ENCODE measurements at regions of chr12 and their contacts with region 1.

Region 1: DNA sequence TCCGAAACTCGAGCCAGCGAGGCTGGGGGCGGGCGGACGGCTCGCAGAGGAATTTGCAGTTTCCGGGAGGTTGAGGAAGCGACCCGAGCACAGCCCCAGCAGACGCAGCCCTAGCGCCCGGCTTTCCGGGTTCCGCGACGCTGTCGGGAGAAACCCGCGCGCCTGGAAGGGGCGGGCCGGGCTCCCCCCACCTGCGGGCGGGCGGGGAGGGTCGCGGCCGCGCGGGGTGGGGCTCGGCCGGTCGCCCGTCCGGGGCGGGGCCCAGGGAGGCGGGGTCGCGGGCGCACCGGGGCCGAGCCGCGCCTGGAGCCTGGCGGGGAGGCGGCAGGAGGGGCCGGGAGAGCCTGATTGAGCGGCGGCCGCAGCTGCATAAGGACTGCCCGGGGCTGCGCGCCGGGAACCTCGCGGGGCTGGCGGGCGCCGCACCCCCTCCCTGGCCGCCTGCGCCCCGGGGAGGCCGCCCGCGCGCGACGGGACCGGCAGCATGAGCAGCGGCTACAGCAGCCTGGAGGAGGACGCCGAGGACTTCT is at the start of gene RASSF3:
- DNase-seq: peak; percentile 44
- ATAC-seq: peak; percentile 75
- H3K4me3 ChIP-seq: peak within 1 kb of the TSS; percentile 89 to 97 (median 95)
- H3K27ac ChIP-seq: peak within 1 kb of the TSS; percentile 80
- H3K4me1 ChIP-seq: peaks cover 34% of the 10 kb centered on the region
- H3K27me3 ChIP-seq: no peaks in the 10 kb centered on the region; a peak in 1 of 5 replicates
- CTCF ChIP-seq: no peak
- EP300 ChIP-seq: no peak
- POLR2A ChIP-seq: peak in 1 of 2 experiments; percentile 52; a peak in 2 of 4 replicates
- RAD21 ChIP-seq: no peak
- total RNA-seq, gene RASSF3: 16.0 and 21.3 TPM in 2 replicates

Region 2: GRCh38 chr12:64544371-64545080 is 65.7 kb before region 1 on chr12:
- CTCF ChIA-PET with region 1: interaction called, 3 read pairs
- POLR2A ChIA-PET with region 1: no interaction called
- in situ Hi-C with region 1: loop called (anchors 5 kb)
- intact Hi-C with region 1: loop called (anchors 1 kb)
- DNase-seq: no peak
- ATAC-seq: no peak
- H3K4me3 ChIP-seq: no peak overlapping the region
- H3K27ac ChIP-seq: no peak overlapping the region
- H3K4me1 ChIP-seq: no peaks in the 10 kb centered on the region
- H3K27me3 ChIP-seq: no peaks in the 10 kb centered on the region
- CTCF ChIP-seq: no peak
- EP300 ChIP-seq: no peak
- POLR2A ChIP-seq: no peak
- RAD21 ChIP-seq: no peak

Region 3: GRCh38 chr12:64596252-64596793 is 13.9 kb before region 1 on chr12:
- CTCF ChIA-PET with region 1: no interaction called
- POLR2A ChIA-PET with region 1: no interaction called
- in situ Hi-C with region 1: no loop called
- intact Hi-C with region 1: loop called (anchors 1 kb)
- DNase-seq: peak; percentile 34
- ATAC-seq: peak; percentile 93
- H3K4me3 ChIP-seq: no peak overlapping the region
- H3K27ac ChIP-seq: no peak overlapping the region
- H3K4me1 ChIP-seq: peaks cover 36% of the 10 kb centered on the region
- H3K27me3 ChIP-seq: no peaks in the 10 kb centered on the region
- CTCF ChIP-seq: no peak
- EP300 ChIP-seq: no peak
- POLR2A ChIP-seq: no peak
- RAD21 ChIP-seq: no peak

Region 4: DNA sequence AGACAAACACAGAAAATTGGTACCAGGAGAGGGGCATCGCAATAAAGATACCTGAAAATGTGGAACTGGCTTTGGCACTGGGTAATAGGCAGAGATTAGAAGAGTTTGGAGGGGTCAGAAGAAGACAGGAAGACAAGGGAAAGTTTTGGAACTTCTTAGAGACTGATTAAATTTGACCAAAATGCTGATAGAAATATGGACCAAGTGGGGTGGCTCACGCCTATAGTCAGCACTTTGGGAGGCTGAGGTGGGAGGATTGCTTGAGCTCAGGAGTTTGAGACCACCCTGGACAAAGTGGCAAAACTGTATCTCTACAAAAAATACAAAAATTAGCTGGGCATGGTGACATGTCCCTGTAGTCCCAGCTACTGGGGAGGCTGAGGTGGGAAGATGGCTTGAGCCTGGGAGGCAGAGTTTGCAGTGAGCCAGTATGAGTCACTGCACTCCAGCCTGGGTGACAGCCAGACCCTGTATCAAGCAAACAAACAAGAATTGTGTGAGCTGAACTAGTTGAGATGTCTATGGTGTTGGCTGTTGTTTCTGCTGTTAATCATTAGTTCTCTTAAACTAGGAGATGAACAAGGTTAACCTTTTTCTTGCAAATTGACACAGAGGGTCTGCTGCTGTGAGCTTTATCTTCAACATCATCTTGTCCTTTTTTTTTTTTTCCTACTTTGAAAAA is 23.6 kb after region 1 on chr12:
- CTCF ChIA-PET with region 1: no interaction called
- POLR2A ChIA-PET with region 1: interaction called, 14 read pairs
- in situ Hi-C with region 1: no loop called
- intact Hi-C with region 1: loop called (anchors 1 kb)
- DNase-seq: peak; percentile 88
- ATAC-seq: peak; percentile 99
- H3K4me3 ChIP-seq: no peak overlapping the region
- H3K27ac ChIP-seq: peak overlapping the region; percentile 36
- H3K4me1 ChIP-seq: peaks cover 58% of the 10 kb centered on the region
- H3K27me3 ChIP-seq: no peaks in the 10 kb centered on the region
- CTCF ChIP-seq: peak; percentile 34; the same call in 1 of the 2 replicates
- EP300 ChIP-seq: 0 out of 4 replicates have a peak, but pooled peaks of 1 of the 2 experiments have one; percentile 12
- POLR2A ChIP-seq: no peak
- RAD21 ChIP-seq: no peak

Region 5: GRCh38 chr12:64679487-64679983 is 69.3 kb after region 1 on chr12:
- CTCF ChIA-PET with region 1: no interaction called
- POLR2A ChIA-PET with region 1: no interaction called
- in situ Hi-C with region 1: no loop called
- intact Hi-C with region 1: no loop called
- DNase-seq: no peak
- ATAC-seq: no peak
- H3K4me3 ChIP-seq: no peak overlapping the region
- H3K27ac ChIP-seq: no peak overlapping the region
- H3K4me1 ChIP-seq: peaks cover 64% of the 10 kb centered on the region
- H3K27me3 ChIP-seq: no peaks in the 10 kb centered on the region
- CTCF ChIP-seq: no peak
- EP300 ChIP-seq: no peak
- POLR2A ChIP-seq: no peak
- RAD21 ChIP-seq: no peak

Region 6: DNA sequence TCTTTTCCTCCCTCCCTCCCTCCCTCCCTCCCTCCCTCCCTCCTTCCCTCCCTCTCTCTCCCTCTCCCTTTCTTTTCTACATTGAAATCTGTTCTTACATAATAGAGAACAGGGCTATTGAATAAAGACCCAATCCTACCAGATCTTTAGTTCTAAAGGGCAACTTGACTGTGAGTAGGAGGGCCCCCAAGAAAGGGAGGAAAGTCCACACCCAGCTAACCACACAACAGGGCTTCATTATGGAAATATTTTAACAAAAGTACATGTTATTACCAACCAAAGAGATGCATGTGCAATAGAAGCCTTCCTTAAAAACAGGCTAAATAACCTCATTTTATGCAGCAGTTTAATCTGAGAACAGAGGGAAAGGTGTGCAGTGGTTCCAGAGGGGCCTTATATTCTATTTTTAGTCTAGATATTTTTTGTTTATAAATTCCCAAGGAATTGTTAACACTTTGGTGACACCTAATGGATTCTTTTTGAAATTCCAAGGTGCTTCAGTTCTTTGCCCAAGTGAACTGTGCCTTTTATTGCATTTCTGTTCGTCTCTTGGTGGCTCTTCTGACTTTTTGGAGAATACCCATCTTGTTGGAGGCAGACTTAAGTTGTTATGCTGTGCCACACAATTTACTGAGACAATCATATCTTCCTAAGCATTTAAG is 86.0 kb after region 1 on chr12:
- CTCF ChIA-PET with region 1: no interaction called
- POLR2A ChIA-PET with region 1: no interaction called
- in situ Hi-C with region 1: no loop called
- intact Hi-C with region 1: loop called (anchors 1 kb)
- DNase-seq: peak; percentile 28
- ATAC-seq: peak; percentile 47
- H3K4me3 ChIP-seq: no peak overlapping the region
- H3K27ac ChIP-seq: no peak overlapping the region
- H3K4me1 ChIP-seq: peaks cover 26% of the 10 kb centered on the region
- H3K27me3 ChIP-seq: no peaks in the 10 kb centered on the region
- CTCF ChIP-seq: peak; percentile 54
- EP300 ChIP-seq: no peak
- POLR2A ChIP-seq: no peak
- RAD21 ChIP-seq: 0 out of 2 replicates have a peak, but pooled peaks have one; percentile 21